MCF 10A (cell line): ENCODE measurements at regions of chr6 and their contacts with region 1.

Region 1: DNA sequence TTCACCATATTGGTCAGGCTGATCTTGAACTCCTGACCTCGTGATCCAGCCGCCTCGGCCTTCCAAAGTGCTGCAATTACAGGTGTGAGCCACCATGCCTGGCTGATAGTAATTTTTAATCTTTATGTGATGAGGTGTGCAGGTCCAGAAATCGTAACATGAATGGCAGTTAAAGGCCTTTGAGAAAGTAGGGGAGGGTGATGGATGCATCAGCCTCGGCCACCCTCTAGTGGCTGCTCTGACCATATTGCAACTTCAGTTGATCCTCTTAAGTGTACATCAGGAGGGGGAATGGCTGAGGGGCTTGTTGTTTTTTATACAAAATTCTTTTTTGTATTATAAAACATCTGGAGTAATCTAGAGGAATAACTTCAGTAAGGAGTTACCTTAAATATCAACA is 193.0 kb downstream of the ZFAND3 start:
- DNase-seq: peak; percentile 66
- H3K4me3 Mint-ChIP-seq: no peak overlapping the region
- H3K27ac Mint-ChIP-seq: no peak overlapping the region
- H3K4me1 Mint-ChIP-seq: peaks cover 5% of the 10 kb centered on the region
- H3K27me3 Mint-ChIP-seq: no peaks in the 10 kb centered on the region
- CTCF ChIP-seq: peak; percentile 76

Region 2: GRCh38 chr6:37607944-37608343 is 404.6 kb before region 1 on chr6:
- CTCF ChIA-PET with region 1: no interaction called
- POLR2A ChIA-PET with region 1: no interaction called
- intact Hi-C with region 1: no loop called
- DNase-seq: peak; percentile 18
- H3K4me3 Mint-ChIP-seq: no peak overlapping the region
- H3K27ac Mint-ChIP-seq: no peak overlapping the region
- H3K4me1 Mint-ChIP-seq: no peaks in the 10 kb centered on the region
- H3K27me3 Mint-ChIP-seq: peaks cover 62% of the 10 kb centered on the region
- CTCF ChIP-seq: peak; percentile 27

Region 3: GRCh38 chr6:37791156-37791919 is 221.2 kb before region 1 on chr6:
- CTCF ChIA-PET with region 1: interaction called, 9 read pairs
- POLR2A ChIA-PET with region 1: no interaction called
- intact Hi-C with region 1: loop called (anchors 1 kb)
- DNase-seq: peak; percentile 97
- H3K4me3 Mint-ChIP-seq: no peak overlapping the region
- H3K27ac Mint-ChIP-seq: no peak overlapping the region
- H3K4me1 Mint-ChIP-seq: peaks cover 28% of the 10 kb centered on the region
- H3K27me3 Mint-ChIP-seq: no peaks in the 10 kb centered on the region
- CTCF ChIP-seq: peak; percentile 94